PC-3 (cell line): ENCODE measurements at regions of chr20 and their contacts with region 1.

Region 1: DNA sequence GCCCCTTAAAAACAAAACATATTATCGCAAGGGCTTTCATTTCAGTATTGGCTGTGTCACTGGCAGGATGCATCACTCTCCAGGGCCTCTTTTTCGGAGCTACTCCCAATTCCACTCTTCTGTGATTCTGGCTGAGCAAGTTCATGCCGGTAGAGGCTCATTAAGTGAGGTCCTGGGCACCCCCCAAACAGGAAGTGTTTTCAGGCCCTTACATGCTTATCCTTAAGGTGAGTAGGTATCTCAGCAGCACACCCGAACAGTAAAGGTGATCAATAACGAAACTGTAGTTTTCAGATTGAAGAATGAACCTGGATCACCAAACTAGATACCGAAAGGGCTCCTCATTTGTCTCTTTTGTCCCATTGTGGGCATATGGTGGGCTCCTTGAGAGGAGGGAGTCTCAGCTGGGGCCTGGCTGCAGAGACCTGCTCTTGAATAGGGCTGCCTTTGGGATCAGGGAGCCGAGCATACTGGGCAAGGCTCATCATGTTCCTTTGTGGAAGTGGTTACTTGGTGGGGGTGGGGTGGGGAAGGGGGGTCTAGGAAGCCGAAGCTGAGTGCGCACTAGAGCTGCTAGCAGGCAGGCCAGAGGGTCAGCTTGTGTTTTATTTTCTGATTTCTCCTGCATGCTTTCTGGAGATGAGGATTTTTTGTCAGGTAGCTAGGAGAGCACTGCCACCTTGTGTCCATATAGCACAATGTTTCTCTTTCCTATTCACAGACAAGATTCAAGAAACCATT is 65.2 kb downstream of the CDS2 start:
- DNase-seq: peak; percentile 82
- ATAC-seq: peak; percentile 87
- H3K4me3 ChIP-seq: no peak overlapping the region
- H3K27ac ChIP-seq: no peak overlapping the region
- H3K4me1 ChIP-seq: no peaks in the 10 kb centered on the region
- H3K27me3 ChIP-seq: no peaks in the 10 kb centered on the region
- CTCF ChIP-seq: peak; percentile 87

Region 2: GRCh38 chr20:5153612-5154542 is 38.1 kb before region 1 on chr20:
- CTCF ChIA-PET with region 1: interaction called, 4 read pairs
- POLR2A ChIA-PET with region 1: no interaction called
- intact Hi-C with region 1: loop called (anchors 2 kb)
- DNase-seq: peak; percentile 96
- ATAC-seq: peak; percentile 90
- H3K4me3 ChIP-seq: peak overlapping the region; percentile 25; the same call in 1 of the 2 replicates
- H3K27ac ChIP-seq: peak overlapping the region; percentile 93
- H3K4me1 ChIP-seq: peaks cover 56% of the 10 kb centered on the region
- H3K27me3 ChIP-seq: no peaks in the 10 kb centered on the region
- CTCF ChIP-seq: no peak

Region 3: DNA sequence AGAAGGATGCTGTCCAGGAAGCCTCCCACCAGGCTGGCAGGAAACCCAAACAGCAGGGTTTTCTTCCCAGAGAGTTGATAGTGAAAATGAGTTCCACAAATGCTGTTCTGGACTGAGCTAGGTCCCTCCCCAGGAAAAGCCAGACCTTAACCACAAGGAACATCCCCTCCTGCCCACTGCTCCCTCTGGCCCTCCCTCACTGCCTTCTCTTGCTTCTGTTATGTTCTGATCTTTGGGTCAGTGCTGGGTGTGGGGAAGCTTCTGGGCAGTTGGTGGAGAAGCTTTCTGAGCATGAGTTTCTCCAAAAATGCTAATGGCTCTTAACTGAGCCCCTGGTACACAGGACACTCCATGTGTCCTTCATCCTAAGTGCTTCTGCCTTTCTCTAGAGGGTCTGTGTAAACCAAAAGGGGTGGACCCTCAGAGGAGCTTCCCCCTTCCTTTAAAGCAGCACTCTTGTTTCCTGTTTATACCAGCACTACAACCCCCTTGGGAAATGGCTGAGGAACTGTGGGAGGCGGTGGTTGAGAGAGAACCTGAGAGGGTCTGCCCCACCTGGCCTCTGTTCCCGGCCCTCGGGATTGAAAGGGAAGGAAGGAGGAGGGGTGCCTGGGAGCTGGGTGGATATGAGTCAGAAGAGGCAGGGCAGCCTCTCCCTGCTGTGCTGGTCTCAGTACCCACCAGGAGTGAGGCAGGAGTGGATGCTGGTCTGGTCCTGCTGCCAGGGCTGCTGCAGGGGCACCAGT is 23.2 kb before region 1 on chr20:
- CTCF ChIA-PET with region 1: interaction called, 3 read pairs
- POLR2A ChIA-PET with region 1: no interaction called
- intact Hi-C with region 1: loop called (anchors 1 kb)
- DNase-seq: peak; percentile 66
- ATAC-seq: peak; percentile 98
- H3K4me3 ChIP-seq: no peak overlapping the region
- H3K27ac ChIP-seq: 0 out of 2 replicates have a peak overlapping the region, but pooled peaks have one; percentile 19
- H3K4me1 ChIP-seq: peaks cover 14% of the 10 kb centered on the region
- H3K27me3 ChIP-seq: no peaks in the 10 kb centered on the region
- CTCF ChIP-seq: no peak

Region 4: DNA sequence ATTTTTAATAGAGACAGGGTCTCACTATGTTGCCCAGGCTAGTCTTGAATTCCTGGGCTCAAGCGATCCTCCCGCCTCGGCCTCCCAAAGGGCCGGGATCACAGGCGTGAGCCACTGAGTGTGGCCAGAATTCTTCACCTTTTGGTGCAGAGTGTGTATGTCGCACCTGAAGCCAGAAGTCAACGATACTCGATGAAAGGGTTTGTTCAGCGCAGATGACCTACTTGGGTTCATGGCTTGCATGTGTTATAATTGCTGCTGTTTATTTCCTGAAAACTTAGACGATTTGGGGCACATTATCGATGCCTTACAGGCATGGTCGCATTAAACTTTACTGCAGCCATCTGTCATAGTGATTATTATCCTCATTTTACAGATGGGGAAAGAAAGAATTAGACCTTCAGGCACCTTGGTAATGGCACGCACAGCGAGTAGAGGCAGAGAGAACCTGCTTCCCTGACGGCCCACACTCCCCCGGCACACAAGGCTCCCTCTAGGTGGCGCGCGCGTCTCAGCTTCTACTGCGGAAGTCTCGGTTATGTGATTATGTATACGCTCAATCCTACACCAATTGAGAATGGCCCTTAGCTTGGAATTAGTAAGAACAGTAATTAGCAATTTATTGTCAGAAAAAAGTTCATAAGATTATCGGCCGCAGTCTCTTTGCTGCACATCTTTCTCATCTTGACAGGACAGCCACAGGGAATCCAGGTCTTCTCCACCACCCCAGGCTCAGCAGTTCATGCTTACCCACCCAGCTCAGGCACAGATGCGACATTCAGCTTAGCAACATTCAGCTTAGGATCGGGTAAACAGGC is 337.5 kb after region 1 on chr20:
- CTCF ChIA-PET with region 1: no interaction called
- POLR2A ChIA-PET with region 1: no interaction called
- intact Hi-C with region 1: no loop called
- DNase-seq: peak; percentile 87
- ATAC-seq: peak; percentile 88
- H3K4me3 ChIP-seq: peak overlapping the region; percentile 57
- H3K27ac ChIP-seq: no peak overlapping the region
- H3K4me1 ChIP-seq: peaks cover 3% of the 10 kb centered on the region; the same call in 1 of the 2 replicates
- H3K27me3 ChIP-seq: 0 out of 2 replicates have a peak, but pooled peaks cover 3% of the 10 kb centered on the region
- CTCF ChIP-seq: peak; percentile 98